Activated naive CD4-positive, alpha-beta T cell treated with anti-CD3 and anti-CD28 coated beads, Interleukin-2, amount 10 ng/mL, durations not matched to agents 7 days and 5 days (primary cell): ENCODE measurements at regions of chr4 and their contacts with region 1.

Region 1: GRCh38 chr4:76504613-76505465 is 69.8 kb downstream of the SHROOM3 start:
- DNase-seq: no peak
- H3K4me3 Mint-ChIP-seq: no peak overlapping the region
- H3K27ac Mint-ChIP-seq: no peak overlapping the region
- H3K4me1 Mint-ChIP-seq: no peaks in the 10 kb centered on the region
- H3K27me3 Mint-ChIP-seq: peaks cover 13% of the 10 kb centered on the region

Region 2: GRCh38 chr4:76420188-76420761 is 84.6 kb before region 1 on chr4:
- CTCF ChIA-PET with region 1: no interaction called
- DNase-seq: no peak
- H3K4me3 Mint-ChIP-seq: no peak overlapping the region
- H3K27ac Mint-ChIP-seq: no peak overlapping the region
- H3K4me1 Mint-ChIP-seq: peaks cover 7% of the 10 kb centered on the region
- H3K27me3 Mint-ChIP-seq: peaks cover 35% of the 10 kb centered on the region

Region 3: GRCh38 chr4:76430519-76431388 is 74.1 kb before region 1 on chr4:
- CTCF ChIA-PET with region 1: interaction called, 54 read pairs
- DNase-seq: no peak
- H3K4me3 Mint-ChIP-seq: no peak overlapping the region
- H3K27ac Mint-ChIP-seq: no peak overlapping the region
- H3K4me1 Mint-ChIP-seq: no peaks in the 10 kb centered on the region
- H3K27me3 Mint-ChIP-seq: peaks cover 18% of the 10 kb centered on the region